ENCODE measurements at regions of chr2 and their contacts with region 1.

Region 1: DNA sequence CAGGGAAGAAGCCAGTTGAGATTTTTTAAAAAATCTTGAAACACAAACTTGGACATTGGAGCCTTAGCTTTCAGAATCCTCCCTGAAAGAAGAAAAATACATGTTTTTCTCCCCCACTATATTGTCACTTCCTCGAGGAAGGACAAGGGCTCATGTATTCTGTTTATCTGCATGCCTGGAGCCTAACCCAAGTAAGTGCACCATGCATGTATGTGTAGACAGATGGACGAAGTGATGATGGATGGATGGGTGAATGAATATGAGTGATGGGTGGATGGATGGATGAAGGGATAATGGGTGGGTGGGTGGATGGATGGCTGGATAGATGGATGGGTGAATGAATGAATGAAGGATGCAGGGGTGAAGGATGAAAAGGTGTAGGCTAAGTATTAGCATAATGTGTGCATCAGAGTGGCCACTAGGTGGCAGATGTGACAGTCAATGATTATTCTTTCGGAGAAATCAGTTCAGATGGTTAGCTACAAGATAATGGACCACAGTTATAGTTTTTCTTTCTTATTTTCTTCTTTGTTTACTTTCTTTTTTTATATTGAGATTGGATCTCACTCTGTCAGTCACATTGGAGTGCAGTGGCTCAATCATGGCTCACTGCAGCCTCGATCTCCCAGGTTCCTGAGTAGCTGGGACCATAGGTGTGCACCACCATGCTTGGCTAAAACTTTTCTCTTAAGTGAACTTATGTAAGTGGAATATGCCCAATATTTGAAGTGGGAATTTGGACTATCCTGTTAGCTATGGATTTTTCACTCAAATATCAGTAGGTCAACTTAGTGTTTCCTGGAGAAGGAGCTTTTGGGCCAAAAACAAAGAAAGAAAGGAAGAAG is 18.5 kb upstream of the CCDC93 start:
- DNase-seq: peak; percentile 44
- ATAC-seq: peak; percentile 94
- H3K4me3 ChIP-seq: no peak overlapping the region
- H3K27ac ChIP-seq: no peak overlapping the region
- H3K4me1 ChIP-seq: no peaks in the 10 kb centered on the region
- H3K27me3 ChIP-seq: peaks cover 0 to 27% of the 10 kb centered on the region in 2 experiments; a peak in 3 of 5 replicates
- CTCF ChIP-seq: peak; percentile 80
- EP300 ChIP-seq: no peak
- POLR2A ChIP-seq: no peak
- RAD21 ChIP-seq: peak; percentile 34; the same call in 1 of the 2 replicates

Region 2: GRCh38 chr2:118061135-118061955 is 29.0 kb after region 1 on chr2:
- CTCF ChIA-PET with region 1: interaction called, 12 read pairs
- POLR2A ChIA-PET with region 1: no interaction called
- in situ Hi-C with region 1: no loop called
- intact Hi-C with region 1: loop called (anchors 1 kb)
- DNase-seq: peak; percentile 52
- ATAC-seq: peak; percentile 88
- H3K4me3 ChIP-seq: no peak overlapping the region
- H3K27ac ChIP-seq: no peak overlapping the region
- H3K4me1 ChIP-seq: peaks cover 34% of the 10 kb centered on the region
- H3K27me3 ChIP-seq: peaks cover 0 to 12% of the 10 kb centered on the region in 2 experiments; a peak in 1 of 5 replicates
- CTCF ChIP-seq: peak; percentile 72
- EP300 ChIP-seq: no peak
- POLR2A ChIP-seq: no peak
- RAD21 ChIP-seq: peak; percentile 44; the same call in 1 of the 2 replicates

Region 3: GRCh38 chr2:118269408-118270051 is 237.1 kb after region 1 on chr2:
- CTCF ChIA-PET with region 1: interaction called, 3 read pairs
- POLR2A ChIA-PET with region 1: no interaction called
- in situ Hi-C with region 1: no loop called
- intact Hi-C with region 1: loop called (anchors 5 kb)
- DNase-seq: peak; percentile 28
- ATAC-seq: peak; percentile 97
- H3K4me3 ChIP-seq: no peak overlapping the region
- H3K27ac ChIP-seq: no peak overlapping the region
- H3K4me1 ChIP-seq: no peaks in the 10 kb centered on the region
- H3K27me3 ChIP-seq: peaks cover 0 to 3% of the 10 kb centered on the region in 2 experiments; a peak in 2 of 5 replicates
- CTCF ChIP-seq: peak; percentile 57
- EP300 ChIP-seq: no peak
- POLR2A ChIP-seq: no peak
- RAD21 ChIP-seq: no peak